ENCODE measurements at regions of chr5 and their contacts with region 1.

Region 1: GRCh38 chr5:33936004-33936380 is 194 bp upstream of the RXFP3 start:
- DNase-seq: peak; percentile 62
- ATAC-seq: peak; percentile 68
- H3K4me3 Mint-ChIP-seq: no peak overlapping the region
- H3K27ac Mint-ChIP-seq: no peak overlapping the region
- H3K4me1 Mint-ChIP-seq: peaks cover 3% of the 10 kb centered on the region
- H3K27me3 Mint-ChIP-seq: peaks cover 80% of the 10 kb centered on the region

Region 2: DNA sequence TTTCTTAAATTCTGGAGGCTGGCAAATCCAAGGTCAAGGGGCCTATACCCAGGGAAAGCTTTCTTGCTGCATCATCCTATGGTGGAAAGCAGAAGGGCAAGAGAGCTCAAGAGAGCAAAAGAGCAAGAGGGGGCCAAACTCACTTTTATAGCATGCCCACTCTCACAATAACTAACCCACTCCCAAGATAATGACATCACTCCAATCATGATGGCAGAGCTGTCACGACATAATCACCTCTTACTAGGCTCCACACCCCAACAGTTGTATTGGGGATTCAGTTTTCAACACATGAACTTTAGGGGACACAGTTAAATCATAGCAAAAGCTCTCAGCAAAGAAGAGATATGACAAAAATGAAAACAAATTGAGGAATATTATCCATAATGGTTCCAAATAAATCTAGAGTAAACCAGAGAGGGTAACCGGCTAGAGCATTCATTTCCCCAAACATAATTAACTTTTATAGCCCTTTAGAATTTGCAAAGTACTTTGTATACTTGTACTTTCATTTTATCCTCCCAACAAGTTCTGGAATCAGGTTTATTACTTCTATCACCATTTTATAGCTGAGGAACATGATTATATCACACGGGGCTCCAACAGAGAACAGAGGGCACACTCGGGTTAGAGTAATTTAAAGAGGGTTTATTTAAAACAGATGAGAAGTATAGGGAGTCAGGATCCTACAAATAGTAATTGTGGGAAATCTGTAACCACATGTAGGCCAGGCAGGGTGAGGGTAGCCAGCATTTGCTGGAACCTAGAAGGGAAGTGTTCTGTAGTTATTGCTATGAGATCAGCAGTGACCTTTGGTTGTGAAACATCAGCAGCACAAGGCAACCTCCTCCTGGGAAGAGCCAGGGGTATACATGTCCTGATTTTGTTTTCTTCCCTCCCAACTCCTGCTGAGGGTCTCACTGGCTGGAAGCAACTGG is 502.4 kb before region 1 on chr5:
- CTCF ChIA-PET with region 1: interaction called, 25 read pairs
- DNase-seq: no peak
- ATAC-seq: no peak
- H3K4me3 Mint-ChIP-seq: no peak overlapping the region
- H3K27ac Mint-ChIP-seq: no peak overlapping the region
- H3K4me1 Mint-ChIP-seq: peaks cover 10% of the 10 kb centered on the region
- H3K27me3 Mint-ChIP-seq: peaks cover 6% of the 10 kb centered on the region

Region 3: DNA sequence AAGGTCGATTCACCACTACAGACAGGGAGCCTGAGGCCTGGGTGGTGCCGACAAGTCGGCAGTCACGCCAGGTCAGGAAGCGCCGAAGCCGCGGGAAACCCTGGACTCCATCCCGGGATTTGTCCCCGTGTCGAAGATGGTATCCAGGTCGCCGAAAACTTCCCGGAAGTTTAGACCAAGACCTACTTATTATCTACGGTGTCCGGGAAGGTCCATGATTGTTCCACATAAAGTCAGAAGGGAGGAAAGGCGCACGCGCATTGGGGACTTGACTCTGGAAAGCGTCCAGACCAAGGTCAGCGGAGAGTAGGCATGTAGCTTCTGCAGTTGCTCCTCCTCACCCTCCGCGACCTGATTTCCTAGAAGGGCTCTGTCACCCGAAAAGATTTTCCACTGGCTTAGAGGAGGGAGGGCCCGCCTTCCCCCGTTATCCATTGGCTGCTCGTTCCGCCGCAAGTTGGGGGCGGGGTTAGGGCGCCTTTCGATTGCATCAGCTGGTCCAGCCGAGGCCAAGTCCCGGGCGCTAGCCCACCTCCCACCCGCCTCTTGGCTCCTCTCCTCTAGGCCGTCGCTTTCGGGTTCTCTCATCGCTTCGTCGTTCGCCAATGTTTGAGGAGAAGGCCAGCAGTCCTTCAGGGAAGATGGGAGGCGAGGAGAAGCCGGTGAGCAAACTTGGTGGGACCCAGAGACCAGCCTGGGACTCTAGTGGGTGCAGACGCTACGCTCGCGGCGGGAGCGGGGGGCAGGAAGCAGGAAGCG is 495.3 kb before region 1 on chr5 and contains the start of gene TARS1:
- CTCF ChIA-PET with region 1: interaction called, 25 read pairs
- DNase-seq: peak; percentile 97
- ATAC-seq: peak; percentile 97
- H3K4me3 Mint-ChIP-seq: no peak within 1 kb of the TSS
- H3K27ac Mint-ChIP-seq: no peak within 1 kb of the TSS
- H3K4me1 Mint-ChIP-seq: peaks cover 38% of the 10 kb centered on the region
- H3K27me3 Mint-ChIP-seq: no peaks in the 10 kb centered on the region
- total RNA-seq, gene TARS1: 157 to 240 TPM

Region 4: GRCh38 chr5:33588654-33589372 is 347.2 kb before region 1 on chr5:
- CTCF ChIA-PET with region 1: interaction called, 21 read pairs
- DNase-seq: peak; percentile 45
- ATAC-seq: no peak
- H3K4me3 Mint-ChIP-seq: no peak overlapping the region
- H3K27ac Mint-ChIP-seq: no peak overlapping the region
- H3K4me1 Mint-ChIP-seq: no peaks in the 10 kb centered on the region
- H3K27me3 Mint-ChIP-seq: peaks cover 3% of the 10 kb centered on the region

Region 5: GRCh38 chr5:33903118-33903517 is 32.9 kb before region 1 on chr5:
- CTCF ChIA-PET with region 1: no interaction called
- DNase-seq: no peak
- ATAC-seq: no peak
- H3K4me3 Mint-ChIP-seq: no peak overlapping the region
- H3K27ac Mint-ChIP-seq: no peak overlapping the region
- H3K4me1 Mint-ChIP-seq: no peaks in the 10 kb centered on the region
- H3K27me3 Mint-ChIP-seq: peaks cover 7% of the 10 kb centered on the region